RWPE1 (cell line): ENCODE measurements at regions of chr5 and their contacts with region 1.

Region 1: DNA sequence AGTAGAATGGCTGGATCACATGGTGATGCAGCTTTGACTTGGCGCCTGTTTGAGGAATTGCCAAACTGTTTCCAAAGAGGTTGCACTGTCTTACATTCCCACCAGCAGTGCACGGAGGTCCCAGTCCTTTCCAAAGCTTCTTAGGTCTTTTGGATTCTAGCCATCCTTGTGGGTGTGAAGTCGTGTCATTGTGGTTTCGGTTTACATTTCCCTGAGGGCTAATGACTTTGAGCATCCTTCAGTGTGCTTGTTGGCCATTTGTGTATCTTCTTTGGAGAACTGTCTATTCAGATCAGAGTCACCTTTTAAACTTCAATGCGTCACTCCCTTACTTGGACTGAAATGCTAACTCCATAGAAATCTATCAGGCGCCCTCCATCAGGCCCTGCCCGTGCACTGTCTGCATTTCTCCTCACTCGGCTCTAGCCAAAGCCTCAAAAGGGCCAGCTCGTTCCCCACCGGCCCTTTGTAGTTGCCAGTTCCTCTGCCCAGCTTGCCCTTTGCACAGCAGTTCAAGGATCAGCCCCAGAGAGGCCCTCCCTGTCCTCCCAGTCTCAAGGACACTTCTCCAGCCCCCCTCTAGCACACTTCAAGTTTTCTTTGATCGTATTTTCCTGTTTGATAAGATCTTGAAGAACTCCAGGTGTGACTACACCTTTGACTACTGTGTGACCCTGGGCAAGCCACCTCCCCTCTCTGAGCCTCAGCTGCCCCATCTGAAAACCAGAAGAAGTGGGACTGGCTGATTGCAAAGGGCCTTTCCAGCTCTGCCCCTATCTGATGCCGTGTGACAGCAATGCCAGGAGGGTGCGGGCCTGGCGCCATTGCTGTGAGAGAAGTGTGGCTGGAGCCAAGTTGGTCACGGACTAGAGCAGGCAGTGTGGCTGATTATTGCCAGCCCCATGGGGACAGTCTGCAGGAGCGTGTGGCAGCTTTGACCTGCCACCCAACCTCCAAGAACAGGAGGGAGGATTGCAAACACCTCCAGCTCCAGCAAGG is 5.6 kb downstream of the HRH2 start:
- DNase-seq: no peak
- H3K27ac ChIP-seq: no peak overlapping the region
- CTCF ChIP-seq: no peak

Region 2: DNA sequence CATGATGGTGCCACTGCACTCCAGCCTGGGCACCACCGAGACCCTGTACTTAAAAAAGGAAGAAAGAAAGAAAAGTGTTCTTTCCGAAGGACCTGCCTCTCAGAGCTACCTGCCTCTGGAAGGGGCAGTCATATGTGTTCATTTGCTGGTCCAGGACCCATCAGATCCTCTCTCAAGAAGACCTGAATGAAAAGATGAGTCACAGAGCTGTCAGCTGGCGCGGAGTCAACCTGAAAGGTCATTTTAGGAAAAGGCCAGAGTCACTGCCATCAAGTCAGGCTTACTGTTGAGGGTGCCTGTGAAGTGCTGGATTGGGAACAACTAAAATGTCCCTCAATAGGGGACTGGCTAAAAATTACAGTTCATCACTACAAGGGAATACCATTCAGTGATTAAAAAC is 20.5 kb before region 1 on chr5:
- CTCF ChIA-PET with region 1: interaction called, 10 read pairs
- POLR2A ChIA-PET with region 1: no interaction called
- DNase-seq: no peak
- H3K27ac ChIP-seq: no peak overlapping the region
- CTCF ChIP-seq: no peak

Region 3: GRCh38 chr5:175902026-175902425 is 238.5 kb after region 1 on chr5:
- CTCF ChIA-PET with region 1: no interaction called
- POLR2A ChIA-PET with region 1: no interaction called
- DNase-seq: no peak
- H3K27ac ChIP-seq: no peak overlapping the region
- CTCF ChIP-seq: no peak